H1 (cell line): ENCODE measurements at regions of chr14 and their contacts with region 1.

Region 1: GRCh38 chr14:69346710-69347109 is 51.4 kb downstream of the ERH start:
- DNase-seq: peak; percentile 33 to 95
- H3K4me3 ChIP-seq: peak overlapping the region in 2 of 4 experiments; percentile 7 to 14; a peak in 1 of 8 replicates
- H3K27ac ChIP-seq: no peak overlapping the region
- H3K4me1 ChIP-seq: peaks cover 0 to 6% (median 2%) of the 10 kb centered on the region in 4 experiments; a peak in 5 of 7 replicates
- H3K27me3 ChIP-seq: no peaks in the 10 kb centered on the region
- CTCF ChIP-seq: peak; percentile 92 to 93 (median 92)
- EP300 ChIP-seq: no peak
- POLR2A ChIP-seq: no peak
- RAD21 ChIP-seq: peak; percentile 73 to 82

Region 2: DNA sequence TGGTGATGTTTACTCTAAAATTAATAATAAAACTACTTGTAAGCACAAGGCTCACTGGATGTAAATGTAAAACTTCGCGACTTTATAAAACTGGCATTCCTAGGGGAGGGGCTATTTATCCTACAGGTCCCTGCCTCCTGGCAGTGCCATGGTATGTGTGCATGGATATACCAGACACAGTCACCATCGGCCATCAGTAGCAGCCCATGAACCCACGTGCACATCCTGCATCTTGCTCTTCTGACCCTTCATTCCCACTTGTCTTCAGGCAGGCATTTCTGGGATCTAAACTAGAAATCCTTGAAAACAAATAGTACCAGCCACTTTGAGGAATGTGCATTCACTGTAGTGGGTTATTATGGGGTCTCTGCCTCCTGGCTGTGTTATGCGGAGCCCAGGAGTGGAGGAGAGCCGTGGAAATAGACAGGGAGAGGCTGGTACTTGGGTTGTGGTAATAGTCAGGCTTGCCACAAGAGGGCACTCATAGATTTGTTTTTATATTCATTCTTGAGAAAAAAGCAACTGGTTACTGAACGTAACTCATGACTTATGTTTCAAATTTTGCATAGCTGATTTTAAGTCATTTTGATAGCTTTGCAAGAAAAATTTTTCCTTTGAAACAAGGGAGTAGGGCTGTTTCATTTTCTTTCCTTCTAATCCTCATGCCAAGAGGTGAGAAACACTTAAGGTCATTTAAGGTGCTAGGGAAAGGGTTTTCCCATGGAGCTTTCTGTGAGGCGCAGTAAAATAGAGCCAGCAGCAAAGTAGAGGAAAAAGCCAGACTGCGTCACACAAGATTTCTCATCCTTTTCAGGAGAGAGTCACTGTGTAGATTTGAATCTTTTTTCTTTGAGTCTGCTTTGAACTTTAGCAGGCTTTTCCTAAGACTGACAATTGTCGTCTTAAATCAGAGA is 104.1 kb before region 1 on chr14:
- CTCF ChIA-PET with region 1: interaction called, 59 read pairs
- POLR2A ChIA-PET with region 1: no interaction called
- DNase-seq: peak in 1 of 2 experiments; percentile 70
- H3K4me3 ChIP-seq: no peak overlapping the region
- H3K27ac ChIP-seq: no peak overlapping the region
- H3K4me1 ChIP-seq: no peaks in the 10 kb centered on the region
- H3K27me3 ChIP-seq: no peaks in the 10 kb centered on the region
- CTCF ChIP-seq: peak; percentile 39 to 65 (median 64)
- EP300 ChIP-seq: no peak
- POLR2A ChIP-seq: no peak
- RAD21 ChIP-seq: peak; percentile 75 to 79

Region 3: GRCh38 chr14:69288011-69288771 is 58.5 kb before region 1 on chr14:
- CTCF ChIA-PET with region 1: interaction called, 15 read pairs
- POLR2A ChIA-PET with region 1: no interaction called
- DNase-seq: peak in 1 of 2 experiments; percentile 46
- H3K4me3 ChIP-seq: no peak overlapping the region
- H3K27ac ChIP-seq: no peak overlapping the region
- H3K4me1 ChIP-seq: peaks cover 0 to 5% (median 2%) of the 10 kb centered on the region in 4 experiments; a peak in 4 of 7 replicates
- H3K27me3 ChIP-seq: no peaks in the 10 kb centered on the region; a peak in 1 of 7 replicates
- CTCF ChIP-seq: peak in 2 of 3 experiments; percentile 25 to 60; a peak in 2 of 4 replicates
- EP300 ChIP-seq: no peak
- POLR2A ChIP-seq: no peak
- RAD21 ChIP-seq: peak; percentile 19 to 28; a peak in 3 of 4 replicates

Region 4: DNA sequence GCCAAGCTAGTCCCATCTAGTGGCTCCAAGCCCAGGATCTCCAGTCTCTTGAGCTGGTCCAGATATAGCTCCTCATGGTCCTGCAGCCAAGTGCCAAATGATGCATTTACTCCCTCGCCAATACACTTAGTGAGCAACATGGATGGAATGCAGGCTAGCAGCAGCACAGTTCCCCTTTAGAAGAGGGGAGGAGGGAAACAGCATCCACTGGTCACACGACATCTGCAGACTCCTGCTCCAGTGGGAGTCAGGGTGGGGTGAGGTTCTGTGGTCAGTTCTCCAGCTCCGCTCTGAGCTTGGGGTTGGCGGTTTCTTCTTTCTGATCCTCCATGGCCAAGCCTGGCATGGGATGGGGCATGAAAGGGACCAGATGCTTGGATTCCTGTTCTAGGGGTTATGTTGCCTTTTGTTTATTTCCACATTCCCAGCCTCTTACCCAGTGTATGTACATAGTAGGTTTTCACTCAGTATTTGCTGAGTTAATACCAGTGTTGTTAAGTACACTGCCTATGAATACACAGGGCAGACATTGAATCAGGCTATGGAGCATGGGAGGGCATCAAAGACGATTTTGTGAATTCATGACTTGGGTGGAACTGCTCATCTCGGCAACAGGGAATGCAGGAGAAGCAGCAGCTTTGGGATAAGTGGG is 29.5 kb before region 1 on chr14:
- CTCF ChIA-PET with region 1: interaction called, 28 read pairs
- POLR2A ChIA-PET with region 1: no interaction called
- DNase-seq: peak in 1 of 2 experiments; percentile 31
- H3K4me3 ChIP-seq: no peak overlapping the region
- H3K27ac ChIP-seq: no peak overlapping the region
- H3K4me1 ChIP-seq: no peaks in the 10 kb centered on the region
- H3K27me3 ChIP-seq: no peaks in the 10 kb centered on the region
- CTCF ChIP-seq: no peak
- EP300 ChIP-seq: no peak
- POLR2A ChIP-seq: no peak
- RAD21 ChIP-seq: no peak

Region 5: GRCh38 chr14:69335371-69335771 is 11.3 kb before region 1 on chr14:
- CTCF ChIA-PET with region 1: interaction called, 140 read pairs
- POLR2A ChIA-PET with region 1: interaction called, 5 read pairs
- DNase-seq: no peak
- H3K4me3 ChIP-seq: no peak overlapping the region
- H3K27ac ChIP-seq: no peak overlapping the region
- H3K4me1 ChIP-seq: peaks cover 0 to 2% (median 0%) of the 10 kb centered on the region in 4 experiments; a peak in 1 of 7 replicates
- H3K27me3 ChIP-seq: no peaks in the 10 kb centered on the region
- CTCF ChIP-seq: no peak
- EP300 ChIP-seq: no peak
- POLR2A ChIP-seq: no peak
- RAD21 ChIP-seq: no peak

Region 6: DNA sequence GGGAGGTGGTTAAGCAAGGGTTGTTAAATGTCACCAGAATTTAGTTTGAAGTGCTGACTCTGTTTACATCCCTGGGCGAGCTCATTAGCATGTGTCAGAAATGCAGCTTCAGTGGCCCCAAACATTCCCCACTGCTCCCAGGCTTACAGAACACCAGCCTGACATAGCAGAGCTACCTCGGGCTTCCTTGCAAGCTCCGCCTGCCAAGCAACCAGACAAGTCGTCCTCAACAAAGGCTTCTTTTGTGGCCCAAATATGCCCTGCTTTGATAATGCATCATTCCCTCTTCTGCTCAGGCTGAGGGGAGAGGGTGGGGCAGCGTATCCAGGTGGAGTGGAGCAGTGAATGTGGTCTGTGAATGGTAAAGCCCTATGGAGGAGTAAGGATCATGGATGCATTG is 23.4 kb after region 1 on chr14:
- CTCF ChIA-PET with region 1: interaction called, 31 read pairs
- POLR2A ChIA-PET with region 1: no interaction called
- DNase-seq: no peak
- H3K4me3 ChIP-seq: no peak overlapping the region
- H3K27ac ChIP-seq: no peak overlapping the region
- H3K4me1 ChIP-seq: no peaks in the 10 kb centered on the region
- H3K27me3 ChIP-seq: no peaks in the 10 kb centered on the region
- CTCF ChIP-seq: no peak
- EP300 ChIP-seq: no peak
- POLR2A ChIP-seq: no peak
- RAD21 ChIP-seq: no peak

Region 7: DNA sequence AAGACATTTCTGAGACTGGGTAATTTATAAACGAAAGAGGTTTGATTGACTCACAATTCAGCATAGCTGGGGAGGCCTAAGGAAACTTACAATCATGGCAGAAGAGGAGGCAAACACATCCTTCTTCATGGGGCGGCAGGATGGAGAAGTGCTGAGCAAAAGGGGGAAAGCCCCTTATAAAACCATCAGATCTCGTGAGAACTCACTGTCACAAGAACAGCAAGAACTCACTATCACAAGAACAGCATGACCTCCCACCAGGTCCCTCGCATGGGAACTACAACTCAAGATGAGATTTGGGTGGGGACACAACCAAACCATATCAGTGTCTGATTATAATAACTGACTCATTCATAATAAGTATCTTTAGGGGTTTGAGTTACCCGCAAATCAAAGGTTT is 58.2 kb after region 1 on chr14:
- CTCF ChIA-PET with region 1: no interaction called
- POLR2A ChIA-PET with region 1: no interaction called
- DNase-seq: no peak
- H3K4me3 ChIP-seq: no peak overlapping the region
- H3K27ac ChIP-seq: no peak overlapping the region
- H3K4me1 ChIP-seq: no peaks in the 10 kb centered on the region
- H3K27me3 ChIP-seq: no peaks in the 10 kb centered on the region
- CTCF ChIP-seq: no peak
- EP300 ChIP-seq: no peak
- POLR2A ChIP-seq: no peak
- RAD21 ChIP-seq: no peak

Region 8: DNA sequence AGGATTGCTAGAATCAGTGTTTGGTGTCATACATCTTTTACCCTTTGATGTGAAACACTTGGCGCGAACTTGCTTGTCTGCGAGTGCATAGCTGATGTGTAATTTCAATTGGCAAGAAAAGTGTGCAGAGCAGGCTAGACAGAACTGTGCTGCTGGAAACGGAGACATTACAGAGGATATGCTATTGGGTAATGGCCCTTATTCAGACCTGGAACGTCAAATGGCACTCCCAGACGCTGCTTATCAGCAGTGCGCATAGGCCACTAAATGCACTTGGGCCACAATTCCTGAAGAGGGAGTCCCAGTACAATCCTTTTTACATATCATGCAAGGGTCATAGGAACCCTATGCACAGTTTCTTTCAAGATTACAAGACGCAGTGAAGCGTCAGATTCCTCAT is 466.0 kb after region 1 on chr14:
- CTCF ChIA-PET with region 1: no interaction called
- POLR2A ChIA-PET with region 1: no interaction called
- DNase-seq: no peak
- H3K4me3 ChIP-seq: no peak overlapping the region
- H3K27ac ChIP-seq: no peak overlapping the region
- H3K4me1 ChIP-seq: no peaks in the 10 kb centered on the region
- H3K27me3 ChIP-seq: no peaks in the 10 kb centered on the region
- CTCF ChIP-seq: peak in 1 of 3 experiments; percentile 18; a peak in 1 of 4 replicates
- EP300 ChIP-seq: no peak
- POLR2A ChIP-seq: no peak
- RAD21 ChIP-seq: peak; percentile 16 to 35; a peak in 2 of 4 replicates